ENCODE measurements at regions of chr2 and their contacts with region 1.

Region 1: DNA sequence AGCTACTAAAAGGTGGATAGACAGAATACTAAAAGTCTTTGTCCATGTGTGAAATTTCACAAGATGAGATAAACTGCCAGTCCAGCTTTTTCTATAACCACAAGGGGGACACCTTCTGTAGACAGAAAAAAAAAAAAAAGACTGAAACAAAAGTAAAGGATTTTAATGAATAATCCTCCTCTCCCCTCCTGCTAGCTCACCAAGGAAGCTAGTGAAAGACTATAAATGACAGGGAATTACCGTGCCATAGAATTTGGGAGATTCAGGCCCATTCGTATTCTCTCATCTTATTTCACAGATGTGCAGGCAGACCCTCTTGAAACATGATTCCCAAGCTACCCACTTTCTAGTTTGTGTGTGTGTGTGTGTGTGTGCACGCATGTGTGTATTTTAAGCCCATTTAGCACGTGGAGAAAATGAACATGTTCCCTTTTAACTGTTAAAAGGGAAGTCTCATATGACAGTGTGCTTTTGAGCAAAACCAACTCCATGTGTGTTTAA is 36.3 kb upstream of the SLC8A1 start:
- DNase-seq: peak; percentile 39
- H3K4me3 ChIP-seq: no peak overlapping the region
- H3K27ac ChIP-seq: no peak overlapping the region
- H3K4me1 ChIP-seq: no peaks in the 10 kb centered on the region
- H3K27me3 ChIP-seq: no peaks in the 10 kb centered on the region
- CTCF ChIP-seq: peak; percentile 15 to 45
- POLR2A ChIP-seq: no peak

Region 2: GRCh38 chr2:40244675-40245074 is 243.5 kb before region 1 on chr2:
- CTCF ChIA-PET with region 1: interaction called, 13 read pairs
- POLR2A ChIA-PET with region 1: no interaction called
- dilution Hi-C with region 1: no loop called
- intact Hi-C with region 1: no loop called
- DNase-seq: peak; percentile 71
- H3K4me3 ChIP-seq: no peak overlapping the region
- H3K27ac ChIP-seq: no peak overlapping the region
- H3K4me1 ChIP-seq: peaks cover 5% of the 10 kb centered on the region
- H3K27me3 ChIP-seq: no peaks in the 10 kb centered on the region
- CTCF ChIP-seq: peak; percentile 47 to 64
- POLR2A ChIP-seq: no peak

Region 3: DNA sequence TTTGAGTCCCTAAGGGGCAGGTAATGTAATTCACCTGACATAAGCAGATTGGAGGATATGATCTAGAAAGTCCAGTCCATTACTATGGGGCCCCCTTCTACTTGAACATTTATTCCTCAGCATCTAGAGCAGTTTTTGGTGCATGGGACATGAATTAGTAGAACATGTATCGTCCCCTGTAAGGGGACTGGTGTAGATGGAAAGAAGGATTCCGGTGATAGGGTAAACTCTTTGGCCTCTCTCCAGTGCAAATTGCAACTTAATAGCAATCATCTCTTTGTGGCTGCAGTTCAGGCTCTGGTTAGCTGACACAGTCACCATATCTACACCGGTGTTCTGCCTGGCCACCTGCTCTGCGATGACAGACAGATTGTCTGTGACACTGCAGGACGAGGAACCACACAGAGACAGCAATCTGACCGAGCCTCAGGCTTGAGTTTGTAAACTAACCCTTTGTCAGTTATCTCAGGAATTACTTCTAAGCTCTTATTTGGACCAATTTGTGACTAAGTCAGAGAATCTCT is 29.8 kb before region 1 on chr2:
- CTCF ChIA-PET with region 1: no interaction called
- POLR2A ChIA-PET with region 1: no interaction called
- dilution Hi-C with region 1: no loop called
- intact Hi-C with region 1: no loop called
- DNase-seq: no peak
- H3K4me3 ChIP-seq: no peak overlapping the region
- H3K27ac ChIP-seq: no peak overlapping the region
- H3K4me1 ChIP-seq: no peaks in the 10 kb centered on the region
- H3K27me3 ChIP-seq: no peaks in the 10 kb centered on the region
- CTCF ChIP-seq: no peak
- POLR2A ChIP-seq: no peak

Region 4: DNA sequence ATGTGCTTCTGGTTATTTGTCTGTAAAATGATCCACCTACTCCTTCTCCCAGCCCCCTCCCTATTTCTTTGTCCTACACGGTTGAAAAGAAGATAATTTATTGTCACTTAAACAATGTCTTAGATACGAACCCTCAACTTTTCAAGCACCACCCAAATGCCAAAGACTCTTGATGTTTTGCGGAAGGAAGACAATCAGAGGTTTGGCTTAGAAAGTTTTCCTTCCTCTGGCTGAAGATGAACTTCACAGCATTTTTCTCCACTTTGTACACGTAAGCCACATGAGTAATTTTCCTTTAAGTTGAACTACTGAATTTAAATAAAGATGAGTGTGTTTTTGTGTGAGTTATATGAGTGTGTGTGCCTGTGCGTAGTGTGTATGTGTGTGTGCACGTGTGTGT is 10.8 kb before region 1 on chr2:
- CTCF ChIA-PET with region 1: interaction called, 13 read pairs
- POLR2A ChIA-PET with region 1: no interaction called
- dilution Hi-C with region 1: no loop called
- intact Hi-C with region 1: no loop called
- DNase-seq: peak; percentile 8
- H3K4me3 ChIP-seq: no peak overlapping the region
- H3K27ac ChIP-seq: no peak overlapping the region
- H3K4me1 ChIP-seq: no peaks in the 10 kb centered on the region
- H3K27me3 ChIP-seq: no peaks in the 10 kb centered on the region
- CTCF ChIP-seq: no peak
- POLR2A ChIP-seq: no peak

Region 5: DNA sequence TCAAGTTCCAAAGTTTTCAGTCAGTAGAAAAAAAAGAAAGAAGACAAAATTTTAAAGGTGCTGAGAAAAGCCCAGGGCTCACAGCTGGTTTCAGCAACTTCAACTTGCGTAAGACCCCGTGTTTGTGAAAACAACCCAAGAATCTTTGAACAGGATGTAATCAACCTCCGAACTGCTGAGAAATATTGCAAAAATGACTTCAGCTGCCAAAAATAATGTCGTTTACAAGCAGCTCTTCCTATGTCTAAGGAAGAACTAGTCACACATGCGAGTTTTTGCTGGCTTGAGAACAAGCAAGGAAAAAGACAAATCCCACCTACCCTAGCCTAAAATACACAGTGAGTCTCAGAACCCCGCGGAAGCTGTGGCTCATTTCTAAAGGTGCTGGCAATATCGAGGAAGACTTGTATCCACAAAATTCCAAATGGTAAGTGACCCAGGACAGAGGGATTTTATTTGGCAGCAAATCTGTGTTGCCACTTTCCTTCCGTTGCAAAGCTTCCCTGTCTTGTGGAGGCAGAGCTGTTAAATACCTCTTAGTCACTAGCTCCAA is 23.6 kb after region 1 on chr2:
- CTCF ChIA-PET with region 1: interaction called, 19 read pairs
- POLR2A ChIA-PET with region 1: no interaction called
- dilution Hi-C with region 1: no loop called
- intact Hi-C with region 1: no loop called
- DNase-seq: peak; percentile 87
- H3K4me3 ChIP-seq: peak overlapping the region in 1 of 3 experiments; percentile 34
- H3K27ac ChIP-seq: peak overlapping the region; percentile 68
- H3K4me1 ChIP-seq: peaks cover 16% of the 10 kb centered on the region
- H3K27me3 ChIP-seq: no peaks in the 10 kb centered on the region
- CTCF ChIP-seq: no peak
- POLR2A ChIP-seq: no peak

Region 6: DNA sequence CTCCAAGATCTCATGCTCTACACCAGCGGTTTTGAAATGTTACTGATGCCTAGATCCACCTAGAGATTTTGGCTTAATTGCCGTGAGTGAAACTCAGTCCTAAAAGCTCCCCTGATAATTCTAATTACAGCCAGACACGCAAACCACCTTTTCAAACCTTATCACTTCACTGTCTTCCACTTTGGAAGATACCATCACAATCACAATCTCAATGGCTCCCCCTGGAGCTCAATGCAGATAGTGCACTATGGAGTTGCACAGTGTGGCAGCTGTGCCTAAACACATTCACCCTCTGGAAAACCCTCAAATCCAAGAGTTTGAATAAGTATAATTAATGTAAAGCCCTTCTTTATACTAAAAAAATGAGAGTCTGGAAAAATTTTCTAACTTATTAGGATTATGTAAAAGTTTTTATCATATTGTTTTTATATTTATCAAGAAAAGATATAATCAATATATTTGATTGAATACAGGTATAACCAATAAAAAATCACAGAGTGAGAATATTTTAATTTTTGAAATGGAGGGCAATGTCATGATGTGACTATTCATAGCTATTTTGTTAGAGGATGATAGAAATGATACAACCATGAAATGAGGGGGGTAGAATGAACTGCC is 66.6 kb after region 1 on chr2:
- CTCF ChIA-PET with region 1: interaction called, 31 read pairs
- POLR2A ChIA-PET with region 1: no interaction called
- dilution Hi-C with region 1: no loop called
- intact Hi-C with region 1: loop called (anchors 1 kb)
- DNase-seq: peak; percentile 69
- H3K4me3 ChIP-seq: no peak overlapping the region
- H3K27ac ChIP-seq: no peak overlapping the region
- H3K4me1 ChIP-seq: no peaks in the 10 kb centered on the region
- H3K27me3 ChIP-seq: no peaks in the 10 kb centered on the region
- CTCF ChIP-seq: peak; percentile 70 to 80
- POLR2A ChIP-seq: no peak

Region 7: GRCh38 chr2:40639320-40639719 is 151.2 kb after region 1 on chr2:
- CTCF ChIA-PET with region 1: no interaction called
- POLR2A ChIA-PET with region 1: no interaction called
- dilution Hi-C with region 1: no loop called
- intact Hi-C with region 1: no loop called
- DNase-seq: no peak
- H3K4me3 ChIP-seq: no peak overlapping the region
- H3K27ac ChIP-seq: no peak overlapping the region
- H3K4me1 ChIP-seq: no peaks in the 10 kb centered on the region
- H3K27me3 ChIP-seq: no peaks in the 10 kb centered on the region
- CTCF ChIP-seq: no peak
- POLR2A ChIP-seq: no peak

Region 8: GRCh38 chr2:40760071-40760666 is 272.0 kb after region 1 on chr2:
- CTCF ChIA-PET with region 1: interaction called, 6 read pairs
- POLR2A ChIA-PET with region 1: no interaction called
- dilution Hi-C with region 1: no loop called
- intact Hi-C with region 1: loop called (anchors 10 kb)
- DNase-seq: peak; percentile 45
- H3K4me3 ChIP-seq: no peak overlapping the region
- H3K27ac ChIP-seq: no peak overlapping the region
- H3K4me1 ChIP-seq: no peaks in the 10 kb centered on the region
- H3K27me3 ChIP-seq: no peaks in the 10 kb centered on the region
- CTCF ChIP-seq: peak; percentile 48 to 49
- POLR2A ChIP-seq: no peak

Region 9: GRCh38 chr2:41698678-41699422 is 1210.7 kb after region 1 on chr2:
- CTCF ChIA-PET with region 1: interaction called, 11 read pairs
- POLR2A ChIA-PET with region 1: no interaction called
- dilution Hi-C with region 1: no loop called
- intact Hi-C with region 1: no loop called
- DNase-seq: peak; percentile 21
- H3K4me3 ChIP-seq: no peak overlapping the region
- H3K27ac ChIP-seq: no peak overlapping the region
- H3K4me1 ChIP-seq: no peaks in the 10 kb centered on the region
- H3K27me3 ChIP-seq: no peaks in the 10 kb centered on the region
- CTCF ChIP-seq: peak; percentile 55 to 84
- POLR2A ChIP-seq: no peak